ENCODE measurements at regions of chr17 and their contacts with region 1.

Region 1: DNA sequence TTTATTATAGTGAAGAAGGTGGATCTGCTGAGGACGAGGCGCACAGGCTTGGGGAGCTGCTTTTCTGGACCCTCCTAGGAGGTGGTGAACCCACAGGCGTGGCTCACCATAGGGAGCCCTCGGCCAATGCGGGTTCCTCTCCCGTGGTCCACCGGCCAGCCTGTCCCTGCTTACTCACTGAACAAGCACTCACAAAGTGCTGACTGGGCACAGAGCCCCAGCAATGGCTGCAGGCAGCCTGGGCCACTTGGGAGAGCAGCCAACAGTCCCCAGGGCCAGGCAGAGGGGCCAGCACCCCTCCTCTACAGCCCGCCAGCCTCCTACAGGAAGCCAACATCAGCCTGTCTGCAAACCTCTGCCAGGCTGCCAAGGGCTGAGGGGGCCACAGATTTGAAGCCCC is 19.1 kb upstream of the NCBP3 start:
- DNase-seq: no peak
- ATAC-seq: no peak
- H3K4me3 ChIP-seq: no peak overlapping the region
- H3K4me3 Mint-ChIP-seq: no peak overlapping the region
- H3K27ac ChIP-seq: no peak overlapping the region
- H3K27ac Mint-ChIP-seq: no peak overlapping the region
- H3K4me1 ChIP-seq: no peaks in the 10 kb centered on the region
- H3K4me1 Mint-ChIP-seq: no peaks in the 10 kb centered on the region
- H3K27me3 ChIP-seq: no peaks in the 10 kb centered on the region
- H3K27me3 Mint-ChIP-seq: no peaks in the 10 kb centered on the region
- CTCF ChIP-seq: no peak

Region 2: GRCh38 chr17:3885970-3886369 is 20.8 kb after region 1 on chr17:
- CTCF ChIA-PET with region 1: interaction called, 11 read pairs
- POLR2A ChIA-PET with region 1: no interaction called
- intact Hi-C with region 1: no loop called
- DNase-seq: no peak
- ATAC-seq: no peak
- H3K4me3 ChIP-seq: no peak overlapping the region
- H3K4me3 Mint-ChIP-seq: no peak overlapping the region
- H3K27ac ChIP-seq: no peak overlapping the region
- H3K27ac Mint-ChIP-seq: peak overlapping the region; percentile 33
- H3K4me1 ChIP-seq: peaks cover 20% of the 10 kb centered on the region
- H3K4me1 Mint-ChIP-seq: peaks cover 19% of the 10 kb centered on the region
- H3K27me3 ChIP-seq: no peaks in the 10 kb centered on the region
- H3K27me3 Mint-ChIP-seq: no peaks in the 10 kb centered on the region
- CTCF ChIP-seq: no peak

Region 3: GRCh38 chr17:3986939-3987335 is 121.8 kb after region 1 on chr17:
- CTCF ChIA-PET with region 1: no interaction called
- POLR2A ChIA-PET with region 1: no interaction called
- intact Hi-C with region 1: no loop called
- DNase-seq: no peak
- ATAC-seq: no peak
- H3K4me3 ChIP-seq: no peak overlapping the region
- H3K4me3 Mint-ChIP-seq: no peak overlapping the region
- H3K27ac ChIP-seq: no peak overlapping the region
- H3K27ac Mint-ChIP-seq: no peak overlapping the region
- H3K4me1 ChIP-seq: no peaks in the 10 kb centered on the region
- H3K4me1 Mint-ChIP-seq: peaks cover 4% of the 10 kb centered on the region
- H3K27me3 ChIP-seq: peaks cover 0 to 2% of the 10 kb centered on the region in 2 experiments
- H3K27me3 Mint-ChIP-seq: no peaks in the 10 kb centered on the region
- CTCF ChIP-seq: no peak

Region 4: DNA sequence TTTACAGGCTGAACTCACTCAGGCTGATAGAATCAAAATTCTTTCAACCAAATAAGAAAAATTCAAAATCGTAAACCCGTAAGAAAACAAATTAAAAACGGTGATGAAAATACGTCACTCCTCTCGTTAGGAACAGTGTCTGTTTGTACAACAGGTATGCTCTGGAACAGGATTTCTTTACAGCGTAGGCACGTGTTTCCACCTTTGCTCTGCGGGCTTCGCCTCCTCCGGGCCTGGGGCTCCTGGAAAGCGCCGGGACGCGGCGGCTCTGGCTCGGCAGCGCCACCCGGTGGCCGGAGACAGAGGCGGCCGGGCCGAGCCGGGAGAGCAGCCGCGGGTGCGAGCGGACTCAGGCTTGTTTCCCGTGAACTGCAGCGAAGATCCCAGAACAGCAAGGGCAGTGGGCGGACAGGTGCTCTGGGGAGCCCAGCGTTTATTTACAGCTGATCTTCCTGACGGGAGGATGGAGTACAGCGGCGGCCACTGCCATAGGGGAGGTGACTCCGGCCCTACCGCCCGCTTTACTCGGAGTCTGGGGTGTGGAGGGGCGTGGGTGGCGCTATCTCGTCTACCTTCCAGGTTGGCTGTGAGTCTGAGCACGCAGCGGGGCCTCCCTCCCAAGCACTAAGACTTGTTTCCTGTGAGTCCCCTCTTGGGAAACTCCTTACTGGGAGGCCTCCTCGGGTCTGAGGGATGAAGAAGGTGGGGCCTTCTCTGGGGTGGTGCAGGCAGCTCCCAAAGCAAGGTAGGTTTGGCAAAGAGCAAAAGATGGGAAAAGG is 139.5 kb after region 1 on chr17:
- CTCF ChIA-PET with region 1: interaction called, 8 read pairs
- POLR2A ChIA-PET with region 1: no interaction called
- intact Hi-C with region 1: loop called in 1 of 2 experiments (anchors 1 kb)
- DNase-seq: peak; percentile 16 to 79 (median 58)
- ATAC-seq: peak; percentile 94
- H3K4me3 ChIP-seq: no peak overlapping the region
- H3K4me3 Mint-ChIP-seq: no peak overlapping the region
- H3K27ac ChIP-seq: no peak overlapping the region
- H3K27ac Mint-ChIP-seq: no peak overlapping the region
- H3K4me1 ChIP-seq: peaks cover 4% of the 10 kb centered on the region
- H3K4me1 Mint-ChIP-seq: peaks cover 4% of the 10 kb centered on the region
- H3K27me3 ChIP-seq: no peaks in the 10 kb centered on the region
- H3K27me3 Mint-ChIP-seq: no peaks in the 10 kb centered on the region
- CTCF ChIP-seq: peak; percentile 98

Region 5: GRCh38 chr17:4074831-4075495 is 209.8 kb after region 1 on chr17:
- CTCF ChIA-PET with region 1: interaction called, 21 read pairs
- POLR2A ChIA-PET with region 1: no interaction called
- intact Hi-C with region 1: loop called in 1 of 2 experiments (anchors 1 kb)
- DNase-seq: peak in 2 of 9 experiments; percentile 66 to 75
- ATAC-seq: peak; percentile 78
- H3K4me3 ChIP-seq: no peak overlapping the region
- H3K4me3 Mint-ChIP-seq: no peak overlapping the region
- H3K27ac ChIP-seq: no peak overlapping the region
- H3K27ac Mint-ChIP-seq: no peak overlapping the region
- H3K4me1 ChIP-seq: no peaks in the 10 kb centered on the region
- H3K4me1 Mint-ChIP-seq: no peaks in the 10 kb centered on the region
- H3K27me3 ChIP-seq: no peaks in the 10 kb centered on the region
- H3K27me3 Mint-ChIP-seq: no peaks in the 10 kb centered on the region
- CTCF ChIP-seq: peak; percentile 71

Region 6: GRCh38 chr17:4534026-4534914 is 669.1 kb after region 1 on chr17:
- CTCF ChIA-PET with region 1: no interaction called
- POLR2A ChIA-PET with region 1: no interaction called
- intact Hi-C with region 1: no loop called
- DNase-seq: peak in 1 of 9 experiments; percentile 12
- ATAC-seq: no peak
- H3K4me3 ChIP-seq: no peak overlapping the region
- H3K4me3 Mint-ChIP-seq: no peak overlapping the region
- H3K27ac ChIP-seq: no peak overlapping the region
- H3K27ac Mint-ChIP-seq: no peak overlapping the region
- H3K4me1 ChIP-seq: peaks cover 3% of the 10 kb centered on the region
- H3K4me1 Mint-ChIP-seq: peaks cover 6% of the 10 kb centered on the region
- H3K27me3 ChIP-seq: no peaks in the 10 kb centered on the region
- H3K27me3 Mint-ChIP-seq: peaks cover 3% of the 10 kb centered on the region
- CTCF ChIP-seq: no peak

Region 7: DNA sequence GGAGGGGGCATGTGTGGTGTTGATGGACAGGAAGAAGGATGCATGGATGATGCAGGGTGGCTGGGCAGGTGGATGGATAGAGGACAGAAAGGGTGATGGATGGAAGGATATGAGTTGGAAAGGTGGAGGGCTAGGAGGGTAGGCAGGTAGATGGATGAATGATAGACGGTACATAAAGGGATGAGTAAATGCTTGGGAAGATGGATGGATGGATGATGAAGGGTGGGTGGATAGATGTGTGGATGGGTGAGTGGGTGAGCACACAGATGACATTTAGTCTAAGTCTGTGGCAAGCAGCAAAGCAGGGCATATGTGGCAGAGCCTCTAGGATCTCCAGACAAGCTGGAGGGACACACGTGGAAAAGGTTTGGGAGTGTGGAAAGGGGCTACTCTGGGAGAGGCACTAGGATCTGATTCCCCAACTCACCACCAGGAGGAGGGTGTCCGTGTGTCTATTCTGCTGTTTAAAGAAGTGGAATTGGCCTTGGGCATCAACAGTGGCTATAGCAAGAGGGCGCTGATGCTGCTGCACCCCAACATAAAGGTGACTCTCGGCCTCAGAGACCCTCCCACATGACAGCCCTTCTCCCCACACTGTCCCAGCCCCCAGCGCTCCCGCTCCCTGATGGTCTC is 950.0 kb after region 1 on chr17:
- CTCF ChIA-PET with region 1: no interaction called
- POLR2A ChIA-PET with region 1: no interaction called
- intact Hi-C with region 1: no loop called
- DNase-seq: no peak
- ATAC-seq: no peak
- H3K4me3 ChIP-seq: no peak overlapping the region
- H3K4me3 Mint-ChIP-seq: no peak overlapping the region
- H3K27ac ChIP-seq: no peak overlapping the region
- H3K27ac Mint-ChIP-seq: no peak overlapping the region
- H3K4me1 ChIP-seq: no peaks in the 10 kb centered on the region
- H3K4me1 Mint-ChIP-seq: no peaks in the 10 kb centered on the region
- H3K27me3 ChIP-seq: no peaks in the 10 kb centered on the region
- H3K27me3 Mint-ChIP-seq: no peaks in the 10 kb centered on the region
- CTCF ChIP-seq: no peak

Measured in CD8-positive, alpha-beta T cell (primary cell).